B cell (primary cell): ENCODE measurements at regions of chr22 and their contacts with region 1.

Region 1: GRCh38 chr22:22357024-22357883 is 112.7 kb downstream of the VPREB1 start:
- DNase-seq: peak; percentile 93
- ATAC-seq: peak; percentile 90
- H3K4me3 ChIP-seq: peak overlapping the region in 3 of 5 experiments; percentile 18 to 27 (median 26)
- H3K4me3 Mint-ChIP-seq: peak overlapping the region; percentile 65
- H3K27ac ChIP-seq: peak overlapping the region; percentile 61 to 71
- H3K27ac Mint-ChIP-seq: peak overlapping the region; percentile 90
- H3K4me1 ChIP-seq: peaks cover 29 to 49% of the 10 kb centered on the region in 2 donors
- H3K4me1 Mint-ChIP-seq: peaks cover 59% of the 10 kb centered on the region
- H3K27me3 ChIP-seq: no peaks in the 10 kb centered on the region
- H3K27me3 Mint-ChIP-seq: no peaks in the 10 kb centered on the region
- CTCF ChIP-seq: peak; percentile 72

Region 2: GRCh38 chr22:22371031-22371541 is 13.8 kb after region 1 on chr22:
- CTCF ChIA-PET with region 1: interaction called, 22 read pairs
- POLR2A ChIA-PET with region 1: interaction called, 3 read pairs
- intact Hi-C with region 1: loop called (anchors 1 kb)
- DNase-seq: no peak
- ATAC-seq: no peak
- H3K4me3 ChIP-seq: no peak overlapping the region
- H3K4me3 Mint-ChIP-seq: peak overlapping the region; percentile 29
- H3K27ac ChIP-seq: no peak overlapping the region
- H3K27ac Mint-ChIP-seq: peak overlapping the region; percentile 64
- H3K4me1 ChIP-seq: peaks cover 73 to 76% of the 10 kb centered on the region in 2 donors
- H3K4me1 Mint-ChIP-seq: peaks cover 87% of the 10 kb centered on the region
- H3K27me3 ChIP-seq: no peaks in the 10 kb centered on the region
- H3K27me3 Mint-ChIP-seq: no peaks in the 10 kb centered on the region
- CTCF ChIP-seq: no peak

Region 3: DNA sequence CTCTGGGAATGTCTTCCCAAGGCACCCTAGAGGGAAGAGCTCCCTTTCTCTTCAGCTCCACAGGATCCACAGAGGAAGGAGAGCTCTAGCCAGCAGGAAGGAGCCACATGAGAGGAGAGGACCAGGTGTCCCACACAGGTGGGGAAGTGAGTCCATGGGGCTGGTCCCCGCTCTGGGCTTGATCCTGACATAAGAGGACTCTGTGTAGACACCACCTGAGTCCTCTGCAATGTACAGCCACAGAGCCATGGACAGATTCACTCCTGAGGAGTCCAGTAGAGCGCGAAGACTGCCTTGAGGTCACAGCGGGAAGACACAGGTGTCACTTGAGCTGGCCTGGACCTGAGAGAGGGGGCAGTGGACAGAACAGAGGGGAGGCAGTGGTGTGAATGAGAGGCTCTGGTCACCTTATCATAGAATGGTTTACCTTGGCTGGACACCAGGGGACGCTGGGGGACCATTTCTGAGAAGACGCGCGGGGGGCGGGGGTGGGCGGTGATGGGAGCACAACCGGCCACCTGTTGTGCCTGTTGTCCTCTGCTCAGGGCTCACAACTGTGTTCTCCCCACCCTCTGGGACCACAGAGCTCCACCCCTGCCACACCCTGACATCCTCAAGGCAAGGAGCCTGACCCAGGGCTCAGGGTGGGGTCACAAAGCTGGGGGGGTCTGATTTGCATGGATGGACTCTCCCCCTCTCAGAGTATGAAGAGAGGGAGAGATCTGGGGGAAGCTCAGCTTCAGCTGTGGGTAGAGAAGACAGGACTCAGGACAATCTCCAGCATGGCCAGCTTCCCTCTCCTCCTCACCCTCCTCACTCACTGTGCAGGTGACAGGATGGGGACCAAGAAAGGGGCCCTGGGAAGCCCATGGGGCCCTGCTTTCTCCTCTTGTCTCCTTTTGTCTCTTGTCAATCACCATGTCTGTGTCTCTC is 23.1 kb after region 1 on chr22:
- CTCF ChIA-PET with region 1: interaction called, 6 read pairs
- POLR2A ChIA-PET with region 1: interaction called, 3 read pairs
- intact Hi-C with region 1: loop called (anchors 1 kb)
- DNase-seq: peak; percentile 87
- ATAC-seq: peak; percentile 88
- H3K4me3 ChIP-seq: peak overlapping the region in 1 of 5 experiments; percentile 15
- H3K4me3 Mint-ChIP-seq: peak overlapping the region; percentile 77
- H3K27ac ChIP-seq: peak overlapping the region; percentile 60 to 72
- H3K27ac Mint-ChIP-seq: peak overlapping the region; percentile 94
- H3K4me1 ChIP-seq: peaks cover 59 to 69% of the 10 kb centered on the region in 2 donors
- H3K4me1 Mint-ChIP-seq: peaks cover 79% of the 10 kb centered on the region
- H3K27me3 ChIP-seq: no peaks in the 10 kb centered on the region
- H3K27me3 Mint-ChIP-seq: no peaks in the 10 kb centered on the region
- CTCF ChIP-seq: peak; percentile 66

Region 4: GRCh38 chr22:22463855-22464540 is 106.7 kb after region 1 on chr22:
- CTCF ChIA-PET with region 1: interaction called, 6 read pairs
- POLR2A ChIA-PET with region 1: no interaction called
- intact Hi-C with region 1: loop called (anchors 2 kb)
- DNase-seq: peak; percentile 84
- ATAC-seq: peak; percentile 47
- H3K4me3 ChIP-seq: peak overlapping the region in 1 of 5 experiments; percentile 46
- H3K4me3 Mint-ChIP-seq: no peak overlapping the region
- H3K27ac ChIP-seq: no peak overlapping the region
- H3K27ac Mint-ChIP-seq: peak overlapping the region; percentile 16
- H3K4me1 ChIP-seq: peaks cover 13 to 15% of the 10 kb centered on the region in 2 donors
- H3K4me1 Mint-ChIP-seq: peaks cover 19% of the 10 kb centered on the region
- H3K27me3 ChIP-seq: no peaks in the 10 kb centered on the region
- H3K27me3 Mint-ChIP-seq: peaks cover 3% of the 10 kb centered on the region
- CTCF ChIP-seq: peak; percentile 88

Region 5: GRCh38 chr22:22498267-22498666 is 141.0 kb after region 1 on chr22:
- CTCF ChIA-PET with region 1: no interaction called
- POLR2A ChIA-PET with region 1: no interaction called
- intact Hi-C with region 1: no loop called
- DNase-seq: no peak
- ATAC-seq: no peak
- H3K4me3 ChIP-seq: no peak overlapping the region
- H3K4me3 Mint-ChIP-seq: no peak overlapping the region
- H3K27ac ChIP-seq: no peak overlapping the region
- H3K27ac Mint-ChIP-seq: no peak overlapping the region
- H3K4me1 ChIP-seq: no peaks in the 10 kb centered on the region
- H3K4me1 Mint-ChIP-seq: peaks cover 3% of the 10 kb centered on the region
- H3K27me3 ChIP-seq: no peaks in the 10 kb centered on the region
- H3K27me3 Mint-ChIP-seq: no peaks in the 10 kb centered on the region
- CTCF ChIP-seq: no peak